ENCODE measurements at regions of chr4 and their contacts with region 1.

Region 1: GRCh38 chr4:183905081-183905592 is at the start of gene STOX2:
- DNase-seq: peak; percentile 78 to 97 (median 86)

Region 2: GRCh38 chr4:183659029-183659871 is 245.9 kb before region 1 on chr4 and contains the starts of genes RWDD4 and TRAPPC11:
- intact Hi-C with region 1: loop called (anchors 5 kb)
- DNase-seq: peak; percentile 95 to 100 (median 98)

Region 3: GRCh38 chr4:183840311-183840710 is 64.8 kb before region 1 on chr4:
- intact Hi-C with region 1: loop called (anchors 5 kb)
- DNase-seq: peak; percentile 67 to 97 (median 92)

Region 4: DNA sequence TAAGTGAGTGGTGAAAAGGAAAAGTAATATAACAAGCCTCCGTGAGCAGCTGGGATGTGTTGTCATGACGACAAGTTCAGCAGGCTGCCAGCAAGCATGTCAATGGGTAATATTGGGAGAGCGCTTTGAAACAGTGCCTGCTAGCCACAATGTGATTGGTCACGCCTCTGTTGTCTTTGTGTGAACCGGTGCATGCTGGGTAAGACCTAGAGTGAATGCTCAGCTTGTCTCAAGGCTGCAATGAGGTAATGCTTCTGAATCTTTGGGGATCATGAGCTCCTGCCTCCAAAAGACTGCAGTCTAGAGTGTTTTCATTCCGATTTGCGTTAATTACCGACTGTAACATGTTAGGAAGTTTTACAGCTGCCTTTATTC is 54.9 kb after region 1 on chr4:
- intact Hi-C with region 1: loop called (anchors 2 kb)
- DNase-seq: peak; percentile 79 to 98 (median 87)

Region 5: DNA sequence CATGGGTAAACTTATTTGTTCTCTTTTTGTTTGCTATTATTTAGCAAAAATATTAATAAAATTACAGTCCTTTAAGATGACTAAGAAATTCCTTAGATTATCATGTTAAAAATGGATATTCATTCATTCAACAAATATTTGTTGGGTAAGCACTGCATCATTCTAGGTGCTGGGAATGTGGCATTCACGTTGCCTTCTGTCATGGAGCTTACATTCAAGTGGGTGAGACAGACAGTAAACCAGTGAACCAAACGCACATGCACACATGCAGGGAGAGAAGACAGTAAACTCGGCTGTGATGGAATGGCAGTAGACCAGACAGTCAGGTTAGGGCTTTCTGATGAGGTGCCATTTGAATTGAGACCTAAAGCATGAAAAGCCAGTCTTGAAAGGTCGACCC is 91.7 kb after region 1 on chr4:
- intact Hi-C with region 1: loop called (anchors 10 kb)
- DNase-seq: no peak

Region 6: DNA sequence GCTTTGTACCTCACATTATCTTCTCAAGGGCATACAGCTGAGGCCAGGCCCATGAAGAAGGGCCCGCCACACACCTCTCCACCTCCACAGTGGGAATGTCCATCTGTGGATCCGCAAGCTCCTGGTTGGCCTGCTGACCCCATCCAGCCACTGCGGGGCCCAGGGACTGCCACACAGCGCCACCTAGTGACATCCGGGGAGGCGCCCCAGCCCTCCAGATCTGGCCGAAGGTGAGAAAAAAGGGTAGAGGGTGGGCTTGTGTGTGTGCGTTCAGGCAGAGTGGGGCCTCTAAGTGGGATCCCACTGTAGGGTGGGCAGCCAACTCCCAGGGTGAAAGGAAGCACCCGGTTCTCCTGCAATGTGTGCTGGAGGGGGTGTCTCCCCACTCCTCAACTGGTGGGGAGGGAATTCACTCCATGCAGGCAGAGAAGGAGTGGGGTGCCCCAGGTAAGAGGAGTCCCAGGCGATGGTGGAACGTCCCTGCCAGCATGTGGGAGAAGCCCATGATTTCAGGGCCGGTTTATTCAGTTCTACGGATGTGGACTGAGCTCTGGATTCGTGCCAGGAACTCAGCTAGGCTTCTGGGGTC is 195.3 kb after region 1 on chr4:
- intact Hi-C with region 1: loop called (anchors 5 kb)
- DNase-seq: peak in 5 of 10 donors; percentile 39 to 90 (median 53)

Region 7: GRCh38 chr4:184156163-184156920 is 251.2 kb after region 1 on chr4:
- intact Hi-C with region 1: loop called (anchors 1 kb)
- DNase-seq: peak in 5 of 10 donors; percentile 22 to 85 (median 28)

Measured in posterior cingulate gyrus (tissue), 11 donors.